Left lung (tissue), 14 donors: ENCODE measurements at regions of chr6 and their contacts with region 1.

Region 1: GRCh38 chr6:131909408-131910218 is 41.6 kb downstream of the CCN2 start:
- DNase-seq: peak in 3 of 4 donors; percentile 36 to 62 (median 40)
- ATAC-seq: peak; percentile 92
- H3K4me3 ChIP-seq: no peak overlapping the region
- H3K27ac ChIP-seq: no peak overlapping the region
- H3K4me1 ChIP-seq: no peaks in the 10 kb centered on the region
- H3K27me3 ChIP-seq: peaks cover 11 to 50% of the 10 kb centered on the region in 2 donors
- CTCF ChIP-seq: peak; percentile 84 to 92

Region 2: DNA sequence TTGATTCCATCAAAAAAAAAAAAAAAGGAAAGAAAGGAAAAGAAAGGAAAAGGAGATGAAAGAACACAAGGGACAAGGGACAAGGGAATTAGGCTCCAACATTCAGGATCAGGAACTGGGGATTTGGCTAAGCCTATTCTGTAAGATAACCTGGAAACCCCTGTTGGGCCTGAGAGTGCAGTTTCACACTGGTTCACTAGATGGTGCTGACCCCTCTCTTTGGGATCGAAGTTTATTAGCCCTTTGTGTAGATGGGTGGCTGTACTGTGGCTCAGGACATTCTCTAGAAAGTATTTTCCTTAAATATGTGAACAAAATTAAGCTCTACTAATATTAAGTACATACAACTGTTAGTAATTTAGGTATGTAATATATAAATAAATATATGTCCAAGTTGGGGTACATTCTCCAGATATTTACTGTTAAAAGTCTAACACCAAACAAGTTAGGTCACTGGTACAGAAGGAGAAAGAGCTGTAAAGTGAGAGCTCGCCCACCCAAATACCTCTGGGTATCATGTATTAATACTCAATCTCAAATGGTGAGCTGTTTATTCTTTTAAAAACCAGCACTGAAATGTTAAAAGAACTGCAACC is 214.7 kb before region 1 on chr6:
- intact Hi-C with region 1: loop called in 1 of 2 experiments (anchors 5 kb)
- DNase-seq: peak in 2 of 4 donors; percentile 22 to 55
- ATAC-seq: peak; percentile 95
- H3K4me3 ChIP-seq: no peak overlapping the region
- H3K27ac ChIP-seq: no peak overlapping the region
- H3K4me1 ChIP-seq: no peaks in the 10 kb centered on the region
- H3K27me3 ChIP-seq: no peaks in the 10 kb centered on the region
- CTCF ChIP-seq: peak; percentile 63 to 72

Region 3: DNA sequence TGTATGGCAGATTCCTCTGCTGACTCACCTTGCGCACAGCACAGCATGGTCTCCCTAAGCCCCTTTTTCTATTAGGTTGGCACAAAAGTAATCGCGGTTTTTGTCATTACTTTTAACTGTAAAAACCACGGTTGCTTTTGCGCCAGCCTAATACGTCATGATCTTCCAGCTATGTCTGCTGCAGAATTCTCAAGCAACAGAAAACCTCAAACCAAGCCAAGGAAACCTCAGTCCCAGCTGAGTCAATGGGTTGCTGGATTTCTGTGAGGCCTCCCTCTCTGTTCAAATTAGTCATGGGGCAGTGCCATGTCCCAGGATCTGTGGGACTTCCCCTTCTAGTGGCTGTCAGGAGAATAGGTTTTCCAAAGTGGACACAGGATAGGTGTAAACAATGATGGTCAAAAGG is 117.5 kb before region 1 on chr6:
- intact Hi-C with region 1: no loop called
- DNase-seq: no peak
- ATAC-seq: no peak
- H3K4me3 ChIP-seq: no peak overlapping the region
- H3K27ac ChIP-seq: no peak overlapping the region
- H3K4me1 ChIP-seq: no peaks in the 10 kb centered on the region
- H3K27me3 ChIP-seq: no peaks in the 10 kb centered on the region
- CTCF ChIP-seq: no peak

Region 4: GRCh38 chr6:131949909-131950766 is 40.5 kb after region 1 on chr6:
- intact Hi-C with region 1: no loop called
- DNase-seq: peak; percentile 70 to 87 (median 74)
- ATAC-seq: peak; percentile 75
- H3K4me3 ChIP-seq: peak overlapping the region; percentile 47 to 56
- H3K27ac ChIP-seq: peak overlapping the region; percentile 85 to 93
- H3K4me1 ChIP-seq: peaks cover 0 to 29% of the 10 kb centered on the region in 2 donors
- H3K27me3 ChIP-seq: peaks cover 0 to 57% of the 10 kb centered on the region in 2 donors
- CTCF ChIP-seq: peak; percentile 19 to 39